Prostate gland (tissue), 2 donors: ENCODE measurements at regions of chr6 and their contacts with region 1.

Region 1: DNA sequence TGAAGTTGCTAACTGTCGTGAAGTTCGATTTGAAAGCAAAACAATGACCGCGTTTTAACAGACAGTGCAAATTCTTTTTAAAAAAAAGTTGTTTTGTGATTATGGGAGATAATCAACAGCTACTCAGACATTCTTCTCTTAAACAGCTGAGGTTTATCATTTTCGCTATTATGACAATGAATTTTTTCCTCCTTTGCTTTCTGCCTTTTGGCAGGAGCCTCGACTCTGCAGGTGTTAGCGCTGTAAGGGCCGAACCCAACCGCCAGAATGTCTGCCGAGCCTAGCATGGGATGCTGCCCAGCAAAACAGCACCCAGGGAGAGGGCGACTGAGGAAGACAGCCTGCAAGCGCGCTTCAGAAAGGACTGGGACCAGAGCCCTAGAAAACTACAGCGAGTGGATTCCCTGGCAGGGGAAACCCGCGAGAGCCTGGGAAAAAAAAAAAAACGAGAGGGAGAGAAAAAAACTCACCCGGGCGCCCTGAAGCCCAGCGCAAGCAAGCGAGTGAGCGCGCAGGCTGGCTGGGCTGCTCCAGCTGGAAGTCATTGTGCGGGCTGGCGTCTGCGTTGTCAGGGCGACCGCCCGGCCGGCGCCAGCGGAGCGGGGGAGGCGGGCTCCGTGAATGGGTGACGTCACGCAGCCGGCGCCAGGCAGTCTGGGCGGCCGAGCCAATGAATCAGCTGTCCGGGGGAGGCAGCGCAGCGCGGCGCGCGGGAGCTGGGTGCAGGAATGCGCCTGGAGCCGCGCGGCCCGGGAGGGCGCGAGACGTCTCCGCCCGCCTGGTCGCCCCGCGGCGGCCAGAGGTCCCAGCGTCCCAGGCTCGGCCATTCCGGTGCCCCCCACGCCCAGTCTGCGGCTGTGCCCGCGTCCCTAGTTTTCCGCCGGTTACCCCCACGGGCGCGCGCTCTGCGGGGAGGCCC is 32.7 kb upstream of the ID4 start:
- DNase-seq: peak; percentile 96
- H3K4me3 ChIP-seq: peak overlapping the region; percentile 43 to 61
- H3K27ac ChIP-seq: peak overlapping the region; percentile 87 to 92
- H3K4me1 ChIP-seq: no peaks in the 10 kb centered on the region
- H3K27me3 ChIP-seq: no peaks in the 10 kb centered on the region
- CTCF ChIP-seq: peak in 1 of 4 experiments; percentile 16
- POLR2A ChIP-seq: peak; percentile 89

Region 2: DNA sequence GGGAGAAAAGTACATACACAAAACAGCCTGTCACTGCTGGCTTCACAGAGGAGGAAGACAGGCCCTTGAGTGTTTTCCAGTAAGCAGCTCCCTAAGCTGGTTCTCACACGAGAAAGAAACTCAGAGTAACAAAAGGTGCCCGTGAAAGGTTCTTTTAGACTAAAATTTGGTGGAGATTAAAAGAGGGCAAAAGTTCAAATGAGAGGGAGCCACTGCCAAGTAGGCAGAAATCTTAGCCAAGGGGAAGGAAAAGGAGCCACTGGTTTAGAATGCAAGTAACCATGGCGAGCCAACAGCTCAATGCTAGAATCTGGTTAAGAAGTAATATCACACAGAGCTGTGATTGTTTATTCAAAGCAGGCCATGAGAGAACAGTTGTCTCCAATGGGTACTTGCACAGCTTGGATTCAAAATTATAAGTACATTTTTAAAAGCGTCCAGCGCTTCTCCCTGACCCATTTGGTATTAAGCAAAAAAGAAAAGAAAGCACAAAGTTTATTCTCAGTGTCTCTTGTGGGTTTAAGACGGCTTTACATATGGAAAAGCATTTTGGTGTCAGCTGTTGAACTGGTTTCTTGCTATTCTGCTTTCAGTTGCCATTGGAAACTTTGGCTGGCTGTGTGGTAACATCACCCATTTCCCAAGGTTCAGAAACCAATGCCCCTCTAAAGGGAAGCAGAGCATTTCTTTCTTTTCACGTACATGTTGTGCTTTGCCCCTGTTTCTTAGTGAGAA is 768.8 kb before region 1 on chr6:
- intact Hi-C with region 1: loop called (anchors 10 kb)
- DNase-seq: no peak
- H3K4me3 ChIP-seq: no peak overlapping the region
- H3K27ac ChIP-seq: peak overlapping the region in 1 of 2 donors; percentile 5
- H3K4me1 ChIP-seq: no peaks in the 10 kb centered on the region
- H3K27me3 ChIP-seq: no peaks in the 10 kb centered on the region
- CTCF ChIP-seq: no peak
- POLR2A ChIP-seq: no peak

Region 3: DNA sequence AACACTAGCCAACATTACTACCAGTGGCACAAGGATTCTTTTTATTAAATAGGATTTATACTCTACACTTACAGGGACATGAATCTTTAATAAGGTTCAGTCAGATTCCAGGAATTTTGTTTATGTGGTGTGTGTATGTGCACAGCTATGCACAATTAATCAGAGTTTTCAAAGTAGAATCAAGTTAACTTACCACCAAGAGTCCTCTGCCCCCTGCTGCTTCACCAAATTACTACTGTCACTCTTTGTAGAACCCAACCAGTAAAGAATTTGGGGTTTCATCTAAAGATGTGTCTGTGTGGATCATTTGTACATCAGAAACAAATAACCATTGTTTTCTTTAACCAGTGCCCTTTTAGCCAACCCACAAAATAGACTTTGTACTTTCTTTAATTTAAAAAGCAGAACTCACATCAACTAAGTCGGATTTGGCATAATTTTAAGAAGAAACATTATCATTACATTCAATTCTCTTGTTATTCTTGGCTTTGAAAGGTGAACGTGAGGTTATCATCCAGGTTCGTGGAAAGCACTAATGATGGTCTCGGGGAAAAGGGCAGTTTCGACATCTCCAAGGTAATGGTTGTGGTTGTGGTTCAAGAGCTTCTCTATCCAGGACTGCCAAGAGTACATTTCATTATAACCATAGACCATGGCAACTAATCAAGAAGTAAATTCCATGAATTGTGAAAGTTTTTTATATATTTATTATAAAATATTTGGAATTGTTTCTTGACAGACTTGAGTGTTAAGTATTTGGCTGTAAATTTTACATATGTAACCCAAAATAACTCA is 481.6 kb before region 1 on chr6:
- intact Hi-C with region 1: loop called (anchors 5 kb)
- DNase-seq: no peak
- H3K4me3 ChIP-seq: no peak overlapping the region
- H3K27ac ChIP-seq: no peak overlapping the region
- H3K4me1 ChIP-seq: no peaks in the 10 kb centered on the region
- H3K27me3 ChIP-seq: no peaks in the 10 kb centered on the region
- CTCF ChIP-seq: no peak
- POLR2A ChIP-seq: no peak

Region 4: DNA sequence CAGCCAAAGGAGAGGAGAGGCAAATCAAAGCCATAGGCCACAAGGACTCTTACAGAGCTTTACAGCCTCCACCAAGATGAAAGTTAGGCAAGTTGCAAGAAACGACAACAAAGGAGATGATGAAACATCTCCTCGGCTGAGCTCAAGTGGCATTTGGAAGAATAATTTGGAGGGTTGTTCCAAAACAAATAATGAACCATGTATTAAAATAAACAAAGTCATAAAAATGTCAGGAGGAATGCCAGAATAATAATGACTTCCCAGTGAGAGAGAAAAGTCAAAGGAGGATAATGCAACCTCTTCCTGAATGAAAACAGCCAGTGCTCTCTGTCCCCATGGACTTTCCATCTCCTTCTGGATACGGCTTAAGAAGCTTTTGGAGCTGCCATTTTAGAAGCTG is 338.7 kb before region 1 on chr6:
- intact Hi-C with region 1: loop called (anchors 5 kb)
- DNase-seq: peak; percentile 50
- H3K4me3 ChIP-seq: no peak overlapping the region
- H3K27ac ChIP-seq: no peak overlapping the region
- H3K4me1 ChIP-seq: peaks cover 12% of the 10 kb centered on the region
- H3K27me3 ChIP-seq: no peaks in the 10 kb centered on the region
- CTCF ChIP-seq: no peak
- POLR2A ChIP-seq: no peak

Region 5: DNA sequence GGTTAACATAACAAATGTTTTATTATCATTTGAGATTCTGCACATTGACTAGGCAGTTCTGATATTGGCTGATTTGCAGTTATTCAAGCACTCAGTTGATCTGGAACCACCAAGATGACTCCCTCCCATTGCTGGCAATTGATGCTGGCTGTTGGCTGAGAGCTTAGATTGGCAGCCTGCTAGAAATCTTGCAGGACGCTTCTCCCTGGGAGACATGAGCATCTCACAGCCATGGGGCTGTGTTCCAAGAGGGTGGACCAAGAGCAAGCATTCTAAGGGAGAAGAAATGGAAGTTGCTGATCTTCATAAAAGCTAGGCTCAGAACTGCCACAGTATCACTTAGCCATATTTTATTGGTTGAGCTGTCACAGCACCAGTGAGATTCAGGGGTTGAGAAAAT is 200.7 kb before region 1 on chr6:
- intact Hi-C with region 1: loop called (anchors 10 kb)
- DNase-seq: no peak
- H3K4me3 ChIP-seq: no peak overlapping the region
- H3K27ac ChIP-seq: no peak overlapping the region
- H3K4me1 ChIP-seq: no peaks in the 10 kb centered on the region
- H3K27me3 ChIP-seq: no peaks in the 10 kb centered on the region
- CTCF ChIP-seq: no peak
- POLR2A ChIP-seq: no peak

Region 6: GRCh38 chr6:19836799-19837510 is 32.5 kb after region 1 on chr6 and contains the start of gene ID4:
- intact Hi-C with region 1: loop called (anchors 2 kb)
- DNase-seq: peak; percentile 98
- H3K4me3 ChIP-seq: peak within 1 kb of the TSS; percentile 68 to 73
- H3K27ac ChIP-seq: peak within 1 kb of the TSS; percentile 89 to 90
- H3K4me1 ChIP-seq: no peaks in the 10 kb centered on the region
- H3K27me3 ChIP-seq: no peaks in the 10 kb centered on the region
- CTCF ChIP-seq: no peak
- POLR2A ChIP-seq: peak; percentile 96
- total RNA-seq, gene ID4: 63.6 to 69.1 TPM